HepG2 (cell line): ENCODE measurements at regions of chr10 and their contacts with region 1.

Region 1: GRCh38 chr10:28663576-28664313 is 13.6 kb upstream of the BAMBI start:
- DNase-seq: peak; percentile 77
- ATAC-seq: peak; percentile 94
- H3K4me3 ChIP-seq: no peak overlapping the region
- H3K27ac ChIP-seq: no peak overlapping the region
- H3K4me1 ChIP-seq: peaks cover 18% of the 10 kb centered on the region
- H3K27me3 ChIP-seq: peaks cover 4 to 34% of the 10 kb centered on the region in 2 experiments
- CTCF ChIP-seq: peak; percentile 91
- EP300 ChIP-seq: no peak
- POLR2A ChIP-seq: no peak
- RAD21 ChIP-seq: peak; percentile 90

Region 2: GRCh38 chr10:28628184-28628893 is 35.4 kb before region 1 on chr10:
- CTCF ChIA-PET with region 1: no interaction called
- POLR2A ChIA-PET with region 1: no interaction called
- in situ Hi-C with region 1: no loop called
- intact Hi-C with region 1: loop called (anchors 2 kb)
- DNase-seq: peak; percentile 62
- ATAC-seq: peak; percentile 87
- H3K4me3 ChIP-seq: no peak overlapping the region
- H3K27ac ChIP-seq: no peak overlapping the region
- H3K4me1 ChIP-seq: peaks cover 16% of the 10 kb centered on the region
- H3K27me3 ChIP-seq: peaks cover 0 to 4% of the 10 kb centered on the region in 2 experiments; a peak in 1 of 5 replicates
- CTCF ChIP-seq: peak; percentile 92
- EP300 ChIP-seq: no peak
- POLR2A ChIP-seq: no peak
- RAD21 ChIP-seq: peak; percentile 84